Motor neuron (in vitro differentiated cells): ENCODE measurements at regions of chr9 and their contacts with region 1.

Region 1: GRCh38 chr9:94783102-94783664 is 56.7 kb downstream of the AOPEP start:
- ATAC-seq: peak; percentile 79 to 97 (median 94)
- H3K4me3 ChIP-seq: no peak overlapping the region
- H3K27ac ChIP-seq: no peak overlapping the region
- H3K4me1 ChIP-seq: peaks cover 0 to 2% of the 10 kb centered on the region in 2 donors

Region 2: DNA sequence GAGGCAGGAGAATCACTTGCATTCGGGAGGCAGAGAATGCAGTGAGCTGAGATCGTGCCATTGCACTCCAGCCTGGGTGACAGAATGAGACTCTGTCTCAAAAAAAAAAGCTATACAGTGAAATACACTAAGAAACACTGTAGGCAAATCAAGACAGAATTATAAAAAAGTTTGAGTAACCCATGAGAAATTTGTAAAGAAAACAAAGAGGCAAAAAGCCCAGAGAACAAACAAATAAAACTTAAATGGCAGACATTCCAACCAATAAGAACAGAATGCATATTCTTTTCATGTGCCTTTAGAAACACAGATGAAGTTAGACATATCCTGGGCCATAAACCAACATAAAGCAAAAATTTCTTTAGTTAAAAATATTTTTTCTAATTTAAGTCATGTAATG is 493.5 kb before region 1 on chr9:
- in situ Hi-C with region 1: no loop called
- ATAC-seq: no peak
- H3K4me3 ChIP-seq: no peak overlapping the region
- H3K27ac ChIP-seq: no peak overlapping the region
- H3K4me1 ChIP-seq: no peaks in the 10 kb centered on the region

Region 3: GRCh38 chr9:94875300-94876020 is 92.3 kb after region 1 on chr9:
- in situ Hi-C with region 1: loop called in 1 of 9 experiments (anchors 25 kb)
- ATAC-seq: no peak
- H3K4me3 ChIP-seq: no peak overlapping the region
- H3K27ac ChIP-seq: no peak overlapping the region
- H3K4me1 ChIP-seq: no peaks in the 10 kb centered on the region

Region 4: GRCh38 chr9:95004411-95005277 is 221.5 kb after region 1 on chr9:
- in situ Hi-C with region 1: loop called in 2 of 9 experiments (anchors 25 kb)
- ATAC-seq: peak; percentile 72 to 93 (median 87)
- H3K4me3 ChIP-seq: peak overlapping the region; percentile 88 to 99 (median 94)
- H3K27ac ChIP-seq: peak overlapping the region; percentile 45 to 58
- H3K4me1 ChIP-seq: peaks cover 0 to 2% of the 10 kb centered on the region in 2 donors